Caco-2 (cell line): ENCODE measurements at regions of chr7 and their contacts with region 1.

Region 1: GRCh38 chr7:71768450-71768849 is 636.5 kb downstream of the GALNT17 start:
- DNase-seq: no peak
- H3K4me3 ChIP-seq: no peak overlapping the region
- H3K4me3 Mint-ChIP-seq: no peak overlapping the region
- H3K27ac Mint-ChIP-seq: no peak overlapping the region
- H3K4me1 ChIP-seq: no peaks in the 10 kb centered on the region
- H3K4me1 Mint-ChIP-seq: no peaks in the 10 kb centered on the region
- H3K27me3 ChIP-seq: no peaks in the 10 kb centered on the region
- H3K27me3 Mint-ChIP-seq: no peaks in the 10 kb centered on the region
- CTCF ChIP-seq: no peak

Region 2: DNA sequence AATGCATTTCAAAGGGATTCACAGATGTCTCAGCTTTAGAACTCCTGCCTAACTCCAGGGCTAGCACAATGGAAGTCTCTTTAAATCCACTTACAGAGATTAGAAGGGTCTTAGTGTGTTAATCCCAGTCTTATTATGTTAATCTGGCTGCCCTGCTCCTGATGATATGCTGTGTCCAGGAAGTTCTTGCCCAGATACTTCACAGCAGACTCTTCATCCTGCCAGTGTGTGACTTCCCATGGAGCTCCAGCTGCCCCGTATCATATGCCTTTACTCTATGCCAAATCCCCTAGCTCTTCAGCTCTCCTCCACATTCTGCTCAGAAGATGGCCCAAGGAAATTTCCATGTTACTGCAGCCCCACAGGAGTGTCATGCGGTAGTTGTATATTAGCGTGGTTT is 102.7 kb before region 1 on chr7:
- CTCF ChIA-PET with region 1: no interaction called
- POLR2A ChIA-PET with region 1: no interaction called
- intact Hi-C with region 1: no loop called
- DNase-seq: no peak
- H3K4me3 ChIP-seq: no peak overlapping the region
- H3K4me3 Mint-ChIP-seq: no peak overlapping the region
- H3K27ac Mint-ChIP-seq: no peak overlapping the region
- H3K4me1 ChIP-seq: no peaks in the 10 kb centered on the region
- H3K4me1 Mint-ChIP-seq: no peaks in the 10 kb centered on the region
- H3K27me3 ChIP-seq: no peaks in the 10 kb centered on the region
- H3K27me3 Mint-ChIP-seq: no peaks in the 10 kb centered on the region
- CTCF ChIP-seq: no peak

Region 3: DNA sequence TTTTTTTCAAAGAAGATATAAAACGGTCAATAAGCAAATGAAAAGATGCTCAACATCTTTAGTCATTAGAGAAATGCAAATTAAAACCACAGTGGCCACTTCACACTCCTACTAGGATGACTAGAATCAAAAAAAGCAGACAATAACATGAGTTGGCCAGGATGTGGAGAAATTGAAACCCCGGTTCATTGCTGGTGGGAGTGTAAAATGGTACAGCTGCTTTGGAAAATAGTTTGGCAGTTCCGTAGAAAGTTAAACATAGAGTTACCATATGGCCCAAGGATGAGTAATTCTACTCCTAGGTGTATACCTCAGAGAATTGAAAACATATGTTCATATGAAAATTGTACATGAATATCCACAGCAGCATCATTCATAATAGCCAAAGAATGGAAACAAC is 63.2 kb before region 1 on chr7:
- CTCF ChIA-PET with region 1: no interaction called
- POLR2A ChIA-PET with region 1: no interaction called
- intact Hi-C with region 1: loop called (anchors 10 kb)
- DNase-seq: no peak
- H3K4me3 ChIP-seq: no peak overlapping the region
- H3K4me3 Mint-ChIP-seq: no peak overlapping the region
- H3K27ac Mint-ChIP-seq: no peak overlapping the region
- H3K4me1 ChIP-seq: no peaks in the 10 kb centered on the region
- H3K4me1 Mint-ChIP-seq: no peaks in the 10 kb centered on the region
- H3K27me3 ChIP-seq: no peaks in the 10 kb centered on the region
- H3K27me3 Mint-ChIP-seq: peaks cover 5% of the 10 kb centered on the region
- CTCF ChIP-seq: no peak